ENCODE measurements at regions of chr3 and their contacts with region 1.

Region 1: GRCh38 chr3:42613462-42613861 is 13.0 kb downstream of the NKTR start:
- DNase-seq: no peak
- ATAC-seq: no peak
- H3K4me3 Mint-ChIP-seq: no peak overlapping the region
- H3K27ac Mint-ChIP-seq: peak overlapping the region; percentile 6
- H3K4me1 Mint-ChIP-seq: peaks cover 35% of the 10 kb centered on the region
- H3K27me3 Mint-ChIP-seq: no peaks in the 10 kb centered on the region

Region 2: DNA sequence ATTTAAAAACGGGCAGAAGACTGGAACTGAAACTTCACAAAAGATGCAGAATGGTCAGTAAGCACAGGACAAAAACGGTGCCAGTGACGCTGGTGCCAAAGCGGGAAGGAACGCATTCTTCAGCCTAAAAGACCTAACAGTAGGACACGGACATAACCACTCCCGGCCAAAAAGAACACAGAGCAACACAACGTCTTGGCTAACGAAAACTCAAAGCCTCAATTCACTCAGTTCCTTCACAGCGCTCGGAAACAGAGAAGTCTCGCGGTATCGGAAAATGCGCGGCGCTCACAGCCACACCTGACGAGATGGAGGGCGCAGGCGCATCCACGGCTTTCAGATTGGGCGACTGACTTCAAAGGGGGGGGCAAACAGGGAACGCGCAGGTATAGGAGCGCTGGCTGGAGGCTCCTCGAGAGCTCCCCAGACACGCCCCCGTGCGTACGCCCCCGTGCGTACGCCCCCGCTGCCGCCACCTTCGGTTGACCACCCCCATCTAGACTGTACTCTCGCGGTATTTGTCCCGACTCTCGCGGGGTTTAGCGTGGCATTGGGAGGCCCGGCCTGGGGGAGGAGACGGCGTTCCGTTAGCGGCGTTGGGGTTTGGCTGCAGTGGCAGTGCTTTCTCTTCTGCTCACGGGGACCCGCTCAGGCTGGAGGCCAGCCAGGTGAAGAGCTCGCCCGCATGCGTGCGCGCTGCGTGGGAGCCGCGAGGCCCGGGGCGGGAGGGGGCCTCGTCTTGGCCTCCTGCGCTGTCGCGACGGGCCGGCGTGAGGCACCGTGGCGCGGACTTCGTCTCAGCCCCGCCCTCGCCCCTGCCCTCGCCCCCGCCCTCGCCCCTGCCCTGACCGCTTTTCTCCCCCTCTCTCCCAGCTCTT is 13.1 kb before region 1 on chr3 and contains the start of gene NKTR:
- CTCF ChIA-PET with region 1: interaction called, 27 read pairs
- DNase-seq: peak; percentile 100
- ATAC-seq: peak; percentile 89
- H3K4me3 Mint-ChIP-seq: peak within 1 kb of the TSS; percentile 87
- H3K27ac Mint-ChIP-seq: peak within 1 kb of the TSS; percentile 99
- H3K4me1 Mint-ChIP-seq: peaks cover 25% of the 10 kb centered on the region
- H3K27me3 Mint-ChIP-seq: no peaks in the 10 kb centered on the region
- total RNA-seq, gene NKTR: 76.0 to 120 TPM

Region 3: DNA sequence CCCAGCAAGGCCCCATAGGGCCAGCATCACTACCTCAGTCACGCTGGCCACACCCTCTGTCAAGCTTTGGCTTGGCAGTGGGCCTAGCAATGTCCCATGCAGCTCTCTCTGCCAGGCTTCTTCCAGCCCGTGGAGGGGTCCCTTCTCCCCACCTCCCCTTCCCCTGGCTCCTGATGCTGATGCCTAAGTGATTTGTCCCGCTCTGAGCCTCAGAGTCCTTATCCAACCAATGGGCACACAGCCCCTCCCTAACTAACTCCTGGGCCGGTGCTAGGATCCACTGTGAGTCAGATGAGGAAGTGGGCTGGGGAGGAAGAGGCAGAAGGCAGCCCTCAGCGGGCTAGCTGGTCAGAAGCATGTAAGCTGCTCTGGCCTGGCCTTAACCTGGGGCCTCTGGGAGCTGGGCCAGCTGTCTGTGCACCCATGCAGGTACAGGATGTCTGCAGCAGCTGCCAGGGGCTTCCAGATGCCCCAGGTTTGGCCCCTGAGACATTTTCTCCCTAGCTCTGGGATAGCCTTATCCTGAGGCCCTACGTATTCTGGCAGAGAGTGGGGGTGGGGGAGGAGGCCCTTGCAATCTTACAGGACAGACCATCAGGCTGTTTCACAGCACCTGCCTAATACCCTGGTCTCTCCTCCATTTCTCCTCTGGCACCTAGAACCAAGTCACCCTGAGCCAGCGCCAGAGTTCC is 39.3 kb after region 1 on chr3:
- CTCF ChIA-PET with region 1: no interaction called
- DNase-seq: peak; percentile 50
- ATAC-seq: peak; percentile 48
- H3K4me3 Mint-ChIP-seq: peak overlapping the region; percentile 65
- H3K27ac Mint-ChIP-seq: peak overlapping the region; percentile 76
- H3K4me1 Mint-ChIP-seq: peaks cover 19% of the 10 kb centered on the region
- H3K27me3 Mint-ChIP-seq: peaks cover 7% of the 10 kb centered on the region

Region 4: DNA sequence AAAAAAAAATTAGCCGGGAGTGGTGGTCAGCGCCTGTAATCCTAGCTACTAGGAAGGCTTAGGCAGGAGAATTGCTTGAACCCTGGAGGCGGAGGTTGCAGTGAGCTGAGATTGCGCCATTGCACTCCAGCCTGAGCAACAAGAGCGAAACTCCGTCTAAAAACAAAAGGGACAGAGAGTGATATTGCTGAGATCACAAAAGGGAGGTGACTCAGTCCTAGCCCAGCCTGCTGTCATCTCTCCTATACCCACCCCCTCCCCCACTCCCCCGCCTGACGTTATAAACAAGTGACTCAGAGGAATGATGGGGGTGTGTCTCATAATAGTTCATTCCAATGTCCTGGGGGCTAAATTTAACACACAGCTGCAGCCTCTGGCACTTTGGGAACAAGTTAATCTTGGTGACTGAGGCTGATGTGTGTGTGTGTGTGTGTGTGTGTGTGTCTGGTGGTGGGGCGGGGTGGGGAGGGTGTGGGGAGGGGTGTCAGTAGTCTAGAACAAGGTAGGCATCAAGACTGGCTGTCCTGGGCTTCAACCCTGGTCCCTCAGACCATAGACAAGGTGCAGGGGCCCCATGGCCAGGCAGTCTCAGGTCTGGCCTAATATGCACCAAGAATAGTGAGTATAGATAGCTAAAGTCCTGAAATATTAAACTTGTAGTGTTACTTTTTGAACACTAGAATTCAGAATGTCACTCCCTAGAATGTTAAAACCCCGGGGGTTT is 70.6 kb after region 1 on chr3:
- CTCF ChIA-PET with region 1: no interaction called
- DNase-seq: peak; percentile 53
- ATAC-seq: peak; percentile 70
- H3K4me3 Mint-ChIP-seq: no peak overlapping the region
- H3K27ac Mint-ChIP-seq: no peak overlapping the region
- H3K4me1 Mint-ChIP-seq: peaks cover 7% of the 10 kb centered on the region
- H3K27me3 Mint-ChIP-seq: peaks cover 36% of the 10 kb centered on the region